ENCODE measurements at regions of chr1 and their contacts with region 1.

Region 1: GRCh38 chr1:196148367-196148970 is 459.8 kb downstream of the KCNT2 start:
- DNase-seq: peak in 2 of 4 donors; percentile 10 to 41
- ATAC-seq: peak; percentile 32
- H3K4me3 ChIP-seq: no peak overlapping the region
- H3K27ac ChIP-seq: no peak overlapping the region
- H3K4me1 ChIP-seq: no peaks in the 10 kb centered on the region
- H3K27me3 ChIP-seq: no peaks in the 10 kb centered on the region
- CTCF ChIP-seq: peak; percentile 36 to 62

Region 2: DNA sequence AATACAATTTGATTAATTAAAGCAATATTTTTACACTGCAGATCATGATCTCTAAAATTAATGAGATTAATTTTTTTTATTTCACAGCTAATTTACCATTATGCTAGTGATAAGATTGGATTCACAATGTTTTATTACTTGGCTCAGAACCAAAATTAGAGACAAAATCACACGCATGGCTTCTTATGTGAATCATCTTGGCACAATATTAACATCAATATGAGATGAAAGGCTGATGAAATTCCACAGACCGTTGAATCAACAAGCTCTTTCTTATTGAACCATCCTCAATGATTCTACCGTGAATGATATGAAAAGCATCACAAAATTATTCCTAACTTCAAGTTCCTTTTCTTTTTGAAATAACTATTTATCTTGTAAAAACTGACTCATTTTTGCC is 85.2 kb before region 1 on chr1:
- intact Hi-C with region 1: no loop called
- DNase-seq: no peak
- ATAC-seq: no peak
- H3K4me3 ChIP-seq: no peak overlapping the region
- H3K27ac ChIP-seq: no peak overlapping the region
- H3K4me1 ChIP-seq: no peaks in the 10 kb centered on the region
- H3K27me3 ChIP-seq: no peaks in the 10 kb centered on the region
- CTCF ChIP-seq: no peak

Region 3: GRCh38 chr1:196309386-196309785 is 160.9 kb after region 1 on chr1:
- intact Hi-C with region 1: loop called in 1 of 2 experiments (anchors 10 kb)
- DNase-seq: peak in 2 of 4 donors; percentile 18 to 45
- ATAC-seq: no peak
- H3K4me3 ChIP-seq: no peak overlapping the region
- H3K27ac ChIP-seq: no peak overlapping the region
- H3K4me1 ChIP-seq: no peaks in the 10 kb centered on the region
- H3K27me3 ChIP-seq: no peaks in the 10 kb centered on the region
- CTCF ChIP-seq: no peak

Region 4: GRCh38 chr1:196418792-196419191 is 270.3 kb after region 1 on chr1:
- intact Hi-C with region 1: no loop called
- DNase-seq: no peak
- ATAC-seq: no peak
- H3K4me3 ChIP-seq: no peak overlapping the region
- H3K27ac ChIP-seq: no peak overlapping the region
- H3K4me1 ChIP-seq: no peaks in the 10 kb centered on the region
- H3K27me3 ChIP-seq: no peaks in the 10 kb centered on the region
- CTCF ChIP-seq: no peak